H1 (cell line): ENCODE measurements at regions of chr6 and their contacts with region 1.

Region 1: DNA sequence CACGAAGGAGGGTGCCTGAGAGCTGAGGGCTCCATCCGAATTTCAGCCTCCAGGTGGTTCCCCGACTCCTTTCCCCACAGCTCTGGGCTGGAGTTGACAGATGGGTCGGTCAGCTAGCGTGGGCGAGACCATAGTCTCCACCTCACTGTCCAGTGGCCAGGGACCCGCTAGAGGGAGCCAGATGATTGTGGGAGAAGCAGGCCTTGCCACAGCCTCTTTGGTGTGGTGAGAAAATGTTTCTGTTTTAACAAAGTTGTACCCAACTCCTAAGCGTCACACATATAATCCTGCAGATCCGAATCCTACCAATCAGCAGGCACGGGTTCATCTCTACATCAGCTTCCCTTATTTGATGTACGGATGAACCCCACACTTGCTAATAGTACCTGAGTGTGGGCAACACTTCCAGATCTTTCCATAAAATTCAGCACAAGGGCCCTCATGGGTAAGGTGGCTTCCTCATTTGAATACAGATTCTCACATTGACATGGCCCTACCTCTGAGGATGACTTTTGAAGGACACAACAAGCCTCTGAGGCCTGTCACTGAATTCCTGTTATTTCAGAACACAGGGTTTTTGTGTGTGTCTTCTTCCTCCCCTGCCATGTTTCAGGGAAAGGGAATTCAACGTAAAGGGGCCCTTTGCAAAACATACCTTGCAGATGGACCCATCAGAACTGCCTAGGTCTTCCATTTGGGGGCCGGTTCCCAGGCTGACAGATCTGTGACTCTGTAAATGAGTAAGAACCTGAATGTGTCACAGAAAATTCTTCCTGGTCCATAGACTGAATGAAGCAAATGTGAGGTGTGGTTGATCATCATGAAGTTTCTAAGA is 103.2 kb upstream of the DUSP22 start:
- DNase-seq: peak; percentile 78 to 88
- H3K4me3 ChIP-seq: no peak overlapping the region
- H3K27ac ChIP-seq: no peak overlapping the region
- H3K4me1 ChIP-seq: no peaks in the 10 kb centered on the region; a peak in 1 of 7 replicates
- H3K27me3 ChIP-seq: no peaks in the 10 kb centered on the region
- CTCF ChIP-seq: peak; percentile 81 to 99 (median 97)
- EP300 ChIP-seq: no peak
- POLR2A ChIP-seq: no peak
- RAD21 ChIP-seq: peak; percentile 99

Region 2: GRCh38 chr6:217048-217659 is 28.1 kb after region 1 on chr6:
- CTCF ChIA-PET with region 1: interaction called, 37 read pairs
- POLR2A ChIA-PET with region 1: no interaction called
- DNase-seq: peak; percentile 36 to 90
- H3K4me3 ChIP-seq: no peak overlapping the region
- H3K27ac ChIP-seq: no peak overlapping the region
- H3K4me1 ChIP-seq: peaks cover 0 to 4% (median 3%) of the 10 kb centered on the region in 4 experiments; a peak in 1 of 7 replicates
- H3K27me3 ChIP-seq: peaks cover 0 to 2% (median 0%) of the 10 kb centered on the region in 4 experiments; a peak in 1 of 7 replicates
- CTCF ChIP-seq: peak; percentile 88 to 92 (median 91)
- EP300 ChIP-seq: no peak
- POLR2A ChIP-seq: no peak
- RAD21 ChIP-seq: peak; percentile 70 to 76

Region 3: DNA sequence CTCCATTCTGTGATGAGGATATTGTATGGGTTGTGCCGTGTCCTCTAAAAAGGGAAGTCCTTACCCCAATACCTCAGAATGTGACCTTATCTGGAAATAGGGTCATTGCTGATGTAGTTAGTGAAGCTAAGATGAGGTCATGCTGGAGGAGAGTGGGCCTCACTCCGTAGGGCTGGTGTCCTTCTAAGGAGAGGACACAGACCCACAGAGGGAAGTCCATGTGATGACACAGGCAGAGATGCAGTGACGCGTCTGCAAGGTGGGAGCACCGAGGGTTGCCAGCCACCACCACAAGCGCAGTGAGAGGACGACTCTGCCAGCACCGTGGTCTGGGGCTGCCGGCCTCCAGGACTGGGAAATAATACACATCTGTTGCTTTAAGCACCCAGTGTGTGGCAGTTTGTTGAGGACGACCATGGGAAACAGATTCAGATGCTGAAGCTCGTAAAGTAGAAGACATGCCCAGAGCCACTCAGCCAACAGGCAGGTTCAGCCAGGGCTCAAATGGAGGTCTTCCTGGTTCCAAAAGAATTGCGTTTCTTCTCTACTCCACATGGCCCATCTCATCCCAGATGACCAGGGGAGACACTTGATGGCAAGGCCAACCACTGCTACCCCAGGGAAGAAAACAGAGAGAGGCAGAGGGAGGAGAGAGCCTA is 44.1 kb after region 1 on chr6:
- CTCF ChIA-PET with region 1: no interaction called
- POLR2A ChIA-PET with region 1: no interaction called
- DNase-seq: no peak
- H3K4me3 ChIP-seq: no peak overlapping the region
- H3K27ac ChIP-seq: no peak overlapping the region
- H3K4me1 ChIP-seq: peaks cover 0 to 8% (median 6%) of the 10 kb centered on the region in 4 experiments; a peak in 4 of 7 replicates
- H3K27me3 ChIP-seq: no peaks in the 10 kb centered on the region
- CTCF ChIP-seq: no peak
- EP300 ChIP-seq: no peak
- POLR2A ChIP-seq: no peak
- RAD21 ChIP-seq: no peak

Region 4: DNA sequence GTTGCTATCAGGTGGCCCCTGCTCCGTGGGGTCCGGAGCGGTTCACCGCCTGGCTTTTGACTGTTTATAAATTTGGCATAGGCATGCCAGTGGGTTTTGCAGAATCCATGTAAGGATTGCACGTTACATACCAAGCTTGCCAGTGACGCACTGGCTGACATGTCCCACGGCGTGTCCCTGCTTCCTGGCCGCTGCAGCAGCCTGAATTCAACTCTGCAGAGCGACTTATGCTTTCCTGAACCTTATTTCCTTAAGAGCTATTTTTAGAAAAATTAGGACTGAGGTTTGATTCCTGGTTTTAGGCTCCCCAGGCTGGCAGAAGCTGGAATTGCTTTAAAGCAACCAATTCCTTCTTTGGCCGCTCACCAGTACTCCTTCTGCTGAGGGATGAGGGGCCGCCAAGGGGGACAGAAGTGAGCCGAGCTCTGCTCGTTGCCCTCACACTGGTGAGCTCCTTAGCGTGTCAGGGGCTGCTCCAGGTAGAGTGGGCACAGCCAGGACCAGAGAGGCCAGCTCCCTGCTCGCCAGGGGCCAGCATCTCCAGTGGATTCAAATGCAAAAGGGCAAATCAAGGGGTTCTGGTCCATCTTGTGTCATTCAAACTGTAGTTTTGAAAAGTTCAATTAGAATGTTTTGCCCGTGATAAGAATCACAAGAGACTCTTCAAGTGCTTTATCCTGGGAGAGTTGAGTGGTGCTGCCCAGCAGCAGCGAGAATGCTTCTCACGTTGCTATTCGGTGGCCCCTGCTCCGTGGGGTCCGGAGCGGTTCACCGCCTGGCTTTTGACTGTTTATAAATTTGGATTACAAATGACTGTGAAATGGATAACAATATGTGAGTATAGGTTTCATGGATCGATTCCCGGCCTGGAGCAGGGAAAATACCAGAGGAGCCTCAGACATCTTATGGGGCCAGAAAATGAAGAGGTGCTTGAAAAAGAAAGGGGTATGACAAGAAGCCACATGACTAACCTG is 185.0 kb after region 1 on chr6:
- CTCF ChIA-PET with region 1: interaction called, 11 read pairs
- POLR2A ChIA-PET with region 1: no interaction called
- DNase-seq: no peak
- H3K4me3 ChIP-seq: no peak overlapping the region
- H3K27ac ChIP-seq: no peak overlapping the region
- H3K4me1 ChIP-seq: peaks cover 0 to 6% (median 0%) of the 10 kb centered on the region in 4 experiments; a peak in 2 of 7 replicates
- H3K27me3 ChIP-seq: no peaks in the 10 kb centered on the region; a peak in 1 of 7 replicates
- CTCF ChIP-seq: no peak; a peak in 1 of 4 replicates
- EP300 ChIP-seq: no peak
- POLR2A ChIP-seq: no peak
- RAD21 ChIP-seq: peak; percentile 47 to 52

Region 5: DNA sequence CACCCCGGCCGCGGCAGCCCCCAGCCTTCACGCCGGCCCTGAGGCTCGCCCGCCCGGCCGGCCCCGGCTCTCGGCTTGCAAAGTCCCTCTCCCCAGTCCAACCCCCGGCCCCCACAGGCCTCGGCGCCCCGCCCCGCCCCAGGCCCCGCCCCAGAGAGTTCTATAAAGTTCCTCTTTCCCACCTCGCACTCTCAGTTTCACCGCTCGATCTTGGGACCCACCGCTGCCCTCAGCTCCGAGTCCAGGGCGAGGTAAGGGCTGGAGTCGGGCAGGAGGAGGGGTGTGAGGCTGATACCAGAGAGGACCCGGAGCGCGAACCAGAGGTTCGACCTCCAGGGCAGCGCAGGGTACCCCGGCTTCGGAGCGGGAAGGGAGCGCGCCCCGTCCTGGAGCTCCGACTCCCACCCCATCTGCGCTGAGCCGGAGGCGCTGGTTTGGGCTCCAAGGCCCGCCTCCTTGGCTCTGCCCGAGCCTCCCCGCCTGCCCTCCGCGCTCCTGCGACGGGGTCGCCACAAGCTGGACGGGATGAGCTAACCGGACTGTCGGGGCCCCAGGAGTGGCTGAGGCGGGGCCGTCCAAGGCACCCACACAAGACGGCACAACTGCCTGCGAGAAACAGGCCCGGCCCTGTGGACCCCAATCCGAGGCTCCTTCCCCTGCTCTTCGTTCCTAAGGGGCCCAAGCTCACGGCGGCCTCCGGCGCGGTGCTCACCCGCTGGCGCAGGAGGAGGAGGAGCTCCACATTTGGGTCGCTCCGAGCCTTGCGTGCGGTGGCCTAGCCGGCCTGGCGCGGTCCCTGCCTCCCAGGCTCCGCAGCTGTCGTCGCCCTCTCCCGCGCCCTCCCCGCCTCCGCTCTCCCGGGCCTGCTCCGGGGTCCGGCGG is 202.8 kb after region 1 on chr6 and contains the start of gene IRF4:
- CTCF ChIA-PET with region 1: interaction called, 12 read pairs
- POLR2A ChIA-PET with region 1: no interaction called
- DNase-seq: peak in 1 of 2 experiments; percentile 84
- H3K4me3 ChIP-seq: peak within 1 kb of the TSS; percentile 42 to 65 (median 46)
- H3K27ac ChIP-seq: no peak within 1 kb of the TSS
- H3K4me1 ChIP-seq: peaks cover 2 to 6% (median 4%) of the 10 kb centered on the region in 4 experiments; a peak in 4 of 7 replicates
- H3K27me3 ChIP-seq: peaks cover 28 to 67% (median 58%) of the 10 kb centered on the region in 4 experiments
- CTCF ChIP-seq: no peak
- EP300 ChIP-seq: no peak
- POLR2A ChIP-seq: peak in 1 of 2 experiments; percentile 43; a peak in 1 of 3 replicates
- RAD21 ChIP-seq: 0 out of 4 replicates have a peak, but pooled peaks of 1 of the 2 experiments have one; percentile 0
- total RNA-seq, gene IRF4: 2.1 and 4.2 TPM in 2 replicates

Region 6: GRCh38 chr6:490251-491037 is 301.4 kb after region 1 on chr6:
- CTCF ChIA-PET with region 1: no interaction called
- POLR2A ChIA-PET with region 1: no interaction called
- DNase-seq: no peak
- H3K4me3 ChIP-seq: no peak overlapping the region
- H3K27ac ChIP-seq: no peak overlapping the region
- H3K4me1 ChIP-seq: no peaks in the 10 kb centered on the region
- H3K27me3 ChIP-seq: no peaks in the 10 kb centered on the region
- CTCF ChIP-seq: no peak
- EP300 ChIP-seq: no peak
- POLR2A ChIP-seq: no peak
- RAD21 ChIP-seq: no peak

Region 7: GRCh38 chr6:593139-593906 is 404.3 kb after region 1 on chr6:
- CTCF ChIA-PET with region 1: interaction called, 10 read pairs
- POLR2A ChIA-PET with region 1: no interaction called
- DNase-seq: no peak
- H3K4me3 ChIP-seq: no peak overlapping the region
- H3K27ac ChIP-seq: 0 out of 2 replicates have a peak overlapping the region, but pooled peaks have one; percentile 25
- H3K4me1 ChIP-seq: peaks cover 0 to 6% (median 3%) of the 10 kb centered on the region in 4 experiments; a peak in 6 of 7 replicates
- H3K27me3 ChIP-seq: no peaks in the 10 kb centered on the region
- CTCF ChIP-seq: peak in 2 of 3 experiments; percentile 39 to 55; a peak in 3 of 4 replicates
- EP300 ChIP-seq: no peak
- POLR2A ChIP-seq: no peak
- RAD21 ChIP-seq: peak; percentile 76 to 78